ENCODE measurements at regions of chr18 and their contacts with region 1.

Region 1: DNA sequence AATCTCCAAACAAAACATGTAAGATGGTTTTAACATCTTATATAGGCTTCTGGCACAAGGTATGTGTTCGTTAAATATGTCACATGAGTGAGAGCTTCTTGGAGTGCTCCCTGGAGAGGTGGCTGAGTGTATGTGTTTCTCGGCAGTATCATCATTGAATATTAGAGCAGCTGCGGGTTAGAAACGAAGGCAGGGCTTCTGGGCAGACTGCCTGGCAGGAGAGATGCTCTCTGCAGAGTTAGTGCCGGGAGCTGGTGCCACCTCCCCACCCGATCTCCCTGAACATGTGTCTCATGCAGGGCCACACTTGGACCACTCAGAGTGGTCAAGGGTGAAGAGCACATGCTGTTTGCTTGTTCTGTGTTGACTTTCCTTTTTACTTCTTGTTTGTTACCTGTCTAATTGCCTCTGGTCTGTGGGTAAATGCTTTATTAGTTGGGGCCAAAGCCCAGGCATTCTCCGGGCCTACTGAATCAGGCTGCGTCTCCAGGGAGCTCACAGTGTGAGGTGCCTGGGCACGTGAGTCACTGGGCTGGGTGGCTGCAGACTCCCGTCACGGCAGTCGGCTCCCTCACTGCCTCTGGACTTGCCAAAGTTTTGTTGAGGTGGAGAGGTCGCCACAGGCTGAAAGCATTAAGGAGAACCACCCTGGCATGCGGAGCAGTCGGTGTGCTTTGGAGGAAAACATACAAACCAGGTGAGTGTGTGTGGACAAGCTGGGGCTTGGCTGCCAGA is 246.6 kb downstream of the FHOD3 start:
- DNase-seq: peak in 1 of 2 donors; percentile 20
- ATAC-seq: peak in 7 of 8 donors; percentile 35 to 75 (median 67)
- H3K4me3 ChIP-seq: no peak overlapping the region
- H3K27ac ChIP-seq: peak overlapping the region in 6 of 10 donors; percentile 34 to 63 (median 42)
- H3K4me1 ChIP-seq: peaks cover 0 to 36% (median 10%) of the 10 kb centered on the region in 9 donors
- H3K27me3 ChIP-seq: no peaks in the 10 kb centered on the region
- CTCF ChIP-seq: no peak

Region 2: GRCh38 chr18:36481201-36481657 is 62.9 kb before region 1 on chr18:
- intact Hi-C with region 1: loop called in 1 of 10 experiments (anchors 10 kb)
- DNase-seq: no peak
- ATAC-seq: no peak
- H3K4me3 ChIP-seq: no peak overlapping the region
- H3K27ac ChIP-seq: no peak overlapping the region
- H3K4me1 ChIP-seq: peaks cover 3 to 53% (median 17%) of the 10 kb centered on the region in 9 donors
- H3K27me3 ChIP-seq: no peaks in the 10 kb centered on the region
- CTCF ChIP-seq: no peak

Measured in heart right ventricle (tissue), 16 donors.